ENCODE measurements at regions of chr10 and their contacts with region 1.

Region 1: GRCh38 chr10:103244663-103245271 is 920 bp upstream of the RPEL1 start:
- DNase-seq: peak; percentile 48 to 76
- ATAC-seq: peak; percentile 86 to 94 (median 89)
- H3K4me3 ChIP-seq: no peak overlapping the region
- H3K27ac ChIP-seq: no peak overlapping the region
- H3K4me1 ChIP-seq: peaks cover 6 to 33% (median 8%) of the 10 kb centered on the region in 9 donors
- H3K27me3 ChIP-seq: no peaks in the 10 kb centered on the region
- CTCF ChIP-seq: peak; percentile 70 to 94 (median 90)

Region 2: DNA sequence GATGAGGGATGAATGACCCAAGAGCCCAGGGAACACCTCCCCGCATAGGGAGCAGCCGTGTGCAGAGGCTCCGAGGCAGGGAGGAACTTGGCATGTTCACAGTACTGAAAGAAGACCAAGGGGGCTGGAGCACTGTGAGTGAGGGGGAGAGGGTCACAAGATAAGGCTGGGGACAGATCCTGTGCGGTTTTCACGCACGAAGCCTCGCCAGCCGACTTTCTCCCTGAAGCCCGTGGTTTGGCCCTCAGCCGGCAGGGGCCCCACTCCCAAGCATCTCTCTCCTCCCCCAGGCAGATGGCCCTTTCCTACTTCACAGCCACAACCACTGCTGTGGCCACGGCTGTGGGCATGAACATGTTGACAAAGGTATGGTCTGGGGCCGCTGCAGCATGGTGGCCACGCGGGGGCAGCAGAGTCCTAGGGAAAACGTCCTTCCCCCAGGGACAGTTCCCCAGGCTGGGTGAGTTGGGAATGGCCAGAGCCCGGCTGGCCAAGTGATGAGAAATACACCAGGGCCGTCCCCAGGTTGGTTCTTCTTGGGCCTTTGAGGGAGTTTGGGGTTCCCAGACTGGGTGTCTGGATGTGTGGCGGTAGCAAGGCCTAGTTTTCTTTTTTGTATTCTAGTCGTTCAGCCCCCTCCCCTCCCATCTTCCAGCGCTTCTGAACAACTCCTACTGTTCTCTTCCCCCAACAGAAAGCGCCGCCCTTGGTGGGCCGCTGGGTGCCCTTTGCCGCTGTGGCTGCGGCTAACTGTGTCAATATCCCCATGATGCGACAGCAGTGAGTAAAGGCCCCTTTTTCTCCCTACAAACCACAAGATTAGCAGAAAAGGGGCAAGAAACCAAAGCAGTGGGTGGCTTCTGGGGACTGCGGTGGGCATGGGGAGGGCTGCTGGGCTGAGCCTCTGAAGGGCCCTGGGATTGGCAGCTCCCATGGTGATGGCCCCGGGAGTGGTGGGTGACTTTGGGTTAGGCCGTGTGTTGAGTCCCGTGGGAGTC is 515.4 kb before region 1 on chr10:
- intact Hi-C with region 1: loop called in 2 of 10 experiments (anchors 5 to 10 kb)
- DNase-seq: peak; percentile 89 to 91
- ATAC-seq: peak; percentile 91 to 97 (median 95)
- H3K4me3 ChIP-seq: no peak overlapping the region
- H3K27ac ChIP-seq: peak overlapping the region in 1 of 10 donors; percentile 6
- H3K4me1 ChIP-seq: peaks cover 0 to 29% (median 6%) of the 10 kb centered on the region in 9 donors
- H3K27me3 ChIP-seq: no peaks in the 10 kb centered on the region
- CTCF ChIP-seq: peak; percentile 82 to 99 (median 96)

Region 3: GRCh38 chr10:102841827-102842345 is 402.9 kb before region 1 on chr10:
- intact Hi-C with region 1: loop called in 6 of 10 experiments (anchors 10 kb)
- DNase-seq: no peak
- ATAC-seq: no peak
- H3K4me3 ChIP-seq: no peak overlapping the region
- H3K27ac ChIP-seq: no peak overlapping the region
- H3K4me1 ChIP-seq: no peaks in the 10 kb centered on the region
- H3K27me3 ChIP-seq: peaks cover 0 to 3% (median 0%) of the 10 kb centered on the region in 7 donors
- CTCF ChIP-seq: no peak

Region 4: DNA sequence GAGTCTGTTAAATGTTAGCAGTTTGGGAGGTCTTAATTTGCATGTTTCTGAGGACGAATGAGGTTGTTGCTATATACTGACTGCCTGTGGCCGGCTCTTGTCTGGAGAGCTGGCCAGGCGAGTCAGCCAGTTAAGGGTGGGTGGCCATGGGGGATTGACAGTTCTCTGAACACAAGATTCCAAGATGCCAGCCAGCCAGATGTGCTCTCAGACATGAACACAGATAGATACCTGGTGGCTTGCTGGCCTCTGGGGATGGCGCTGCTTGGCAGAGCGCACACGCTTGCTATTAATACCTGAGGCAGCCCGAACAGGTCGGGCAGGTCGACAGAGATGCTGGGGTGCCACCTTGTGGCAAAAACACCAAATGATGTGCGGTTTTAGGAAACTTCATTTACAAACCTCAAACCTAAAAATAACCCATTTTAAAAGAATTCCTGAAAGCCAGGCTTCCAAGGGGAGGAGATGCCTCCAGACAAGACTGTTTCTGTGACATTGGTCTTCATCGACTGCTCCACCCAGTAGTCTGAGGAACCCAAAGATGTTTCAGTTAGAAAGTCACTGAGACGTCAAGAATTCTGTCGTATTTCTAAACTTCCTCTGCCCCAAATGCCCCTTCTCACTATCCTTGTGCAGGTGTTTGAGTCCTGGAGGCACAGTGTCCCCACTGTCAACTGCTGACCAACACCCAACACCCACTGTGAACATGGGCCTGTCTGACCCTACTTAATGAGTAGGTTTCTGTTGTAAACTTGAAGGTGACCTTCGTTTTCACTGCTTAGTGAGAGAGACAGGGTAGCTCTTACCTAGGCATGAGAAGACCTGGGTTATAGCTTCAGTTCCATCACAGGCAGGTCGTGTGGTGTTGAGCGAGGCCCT is 175.1 kb before region 1 on chr10:
- intact Hi-C with region 1: loop called in 1 of 10 experiments (anchors 10 kb)
- DNase-seq: peak; percentile 48 to 49
- ATAC-seq: peak; percentile 58 to 84 (median 80)
- H3K4me3 ChIP-seq: no peak overlapping the region
- H3K27ac ChIP-seq: no peak overlapping the region
- H3K4me1 ChIP-seq: peaks cover 0 to 19% (median 3%) of the 10 kb centered on the region in 9 donors
- H3K27me3 ChIP-seq: no peaks in the 10 kb centered on the region
- CTCF ChIP-seq: peak; percentile 38 to 76 (median 67)

Region 5: DNA sequence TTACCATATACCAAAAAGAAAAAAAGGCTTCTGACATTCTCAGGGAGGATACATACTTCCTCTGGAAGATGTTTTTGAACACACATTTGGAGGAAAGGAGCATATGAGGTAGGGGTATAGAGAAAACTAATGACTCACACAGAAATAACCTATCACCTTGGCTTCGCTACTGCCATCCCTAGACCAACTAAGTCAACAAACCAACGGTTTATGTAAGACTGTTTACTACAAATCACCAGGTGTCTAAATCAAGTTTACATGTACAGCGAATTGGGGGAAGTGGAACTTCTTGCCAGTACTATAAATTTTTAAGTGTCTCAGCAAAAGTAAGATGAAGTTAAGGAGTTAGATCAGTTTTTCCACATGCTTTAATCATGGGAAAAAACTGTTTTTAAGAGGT is 148.6 kb before region 1 on chr10:
- intact Hi-C with region 1: loop called in 4 of 10 experiments (anchors 10 kb)
- DNase-seq: no peak
- ATAC-seq: no peak
- H3K4me3 ChIP-seq: no peak overlapping the region
- H3K27ac ChIP-seq: no peak overlapping the region
- H3K4me1 ChIP-seq: peaks cover 0 to 9% (median 0%) of the 10 kb centered on the region in 9 donors
- H3K27me3 ChIP-seq: no peaks in the 10 kb centered on the region
- CTCF ChIP-seq: no peak

Region 6: DNA sequence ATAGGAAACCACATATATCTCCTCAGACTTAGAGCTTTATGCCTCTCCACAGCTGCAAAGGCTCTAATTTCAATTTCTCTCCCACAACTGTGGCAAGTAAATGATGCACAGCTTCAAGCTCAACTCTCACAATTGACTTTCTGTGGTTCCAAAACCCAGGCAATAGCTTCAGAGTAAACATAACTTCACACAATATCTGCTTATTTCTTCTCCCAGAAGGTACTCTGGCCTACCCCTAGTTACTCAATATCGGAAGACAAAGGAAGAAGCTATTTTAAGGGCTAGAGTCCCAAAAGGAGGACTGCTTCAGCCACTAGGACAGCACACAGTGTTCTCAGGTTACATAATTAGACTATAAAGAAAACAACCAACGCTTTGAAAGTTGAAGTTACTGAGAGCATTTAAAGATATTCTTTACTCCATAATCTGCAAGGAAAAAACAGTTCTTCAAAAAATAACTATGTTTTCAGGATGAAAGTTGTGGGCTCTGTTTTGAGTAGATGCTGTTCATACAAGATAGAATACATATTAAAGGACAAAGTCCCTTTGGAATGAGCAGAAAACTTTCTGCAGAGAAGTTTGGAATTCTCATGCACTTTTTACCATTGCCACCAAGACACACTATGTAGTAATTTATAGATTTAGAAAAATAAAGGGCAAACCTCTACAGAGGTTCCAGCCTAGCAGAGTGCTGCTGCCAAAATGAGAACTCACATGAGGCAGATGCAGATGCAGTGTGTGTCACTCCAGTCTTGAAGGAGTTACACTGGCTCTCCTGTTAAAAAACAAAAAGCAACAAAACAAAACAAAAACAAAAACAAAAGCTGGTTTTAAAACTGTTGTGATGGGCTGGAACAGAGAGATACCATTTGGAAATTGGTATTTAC is 133.5 kb before region 1 on chr10:
- intact Hi-C with region 1: loop called in 2 of 10 experiments (anchors 5 to 10 kb)
- DNase-seq: no peak
- ATAC-seq: peak in 7 of 8 donors; percentile 80 to 97 (median 87)
- H3K4me3 ChIP-seq: peak overlapping the region in 1 of 10 donors; percentile 3
- H3K27ac ChIP-seq: peak overlapping the region; percentile 16 to 78 (median 48)
- H3K4me1 ChIP-seq: peaks cover 14 to 45% (median 37%) of the 10 kb centered on the region in 9 donors
- H3K27me3 ChIP-seq: no peaks in the 10 kb centered on the region
- CTCF ChIP-seq: peak in 1 of 9 donors; percentile 7

Region 7: GRCh38 chr10:103396064-103396788 is 151.5 kb after region 1 on chr10 and contains the starts of genes ATP5MK and PDCD11:
- intact Hi-C with region 1: no loop called
- DNase-seq: peak; percentile 96 to 99
- ATAC-seq: peak; percentile 99 to 100 (median 100)
- H3K4me3 ChIP-seq: peak within 1 kb of the TSS; percentile 80 to 98 (median 86)
- H3K27ac ChIP-seq: peak within 1 kb of the TSS; percentile 77 to 96 (median 92)
- H3K4me1 ChIP-seq: peaks cover 3 to 53% (median 44%) of the 10 kb centered on the region in 9 donors
- H3K27me3 ChIP-seq: no peaks in the 10 kb centered on the region
- CTCF ChIP-seq: peak in 3 of 9 donors; percentile 23 to 35 (median 25)
- total RNA-seq, gene ATP5MK: 936 to 1,374 (median 1,266) TPM
- total RNA-seq, gene PDCD11: 9.4 to 16.9 (median 12.7) TPM

Region 8: DNA sequence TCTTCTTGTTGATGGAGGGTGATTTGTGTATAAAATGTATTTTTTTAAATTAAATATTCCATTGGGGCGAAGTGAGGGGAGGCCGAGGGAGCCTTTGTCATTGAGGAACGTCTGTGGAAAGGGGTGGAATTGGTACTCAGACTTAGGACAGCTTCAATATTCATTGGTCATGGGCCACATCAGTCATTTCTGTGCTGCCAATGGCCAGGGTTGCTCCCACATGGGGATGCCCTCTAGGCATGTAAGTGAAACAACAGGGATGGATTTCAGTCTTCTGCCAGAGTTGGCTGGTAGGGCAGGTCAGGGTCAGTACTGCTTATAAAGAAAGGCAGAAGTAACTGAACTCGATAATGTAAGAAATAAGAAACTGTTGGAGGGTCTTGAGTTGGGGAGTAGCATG is 296.0 kb after region 1 on chr10:
- intact Hi-C with region 1: no loop called
- DNase-seq: no peak
- ATAC-seq: no peak
- H3K4me3 ChIP-seq: no peak overlapping the region
- H3K27ac ChIP-seq: no peak overlapping the region
- H3K4me1 ChIP-seq: peaks cover 5 to 15% (median 11%) of the 10 kb centered on the region in 9 donors
- H3K27me3 ChIP-seq: peaks cover 0 to 13% (median 0%) of the 10 kb centered on the region in 7 donors
- CTCF ChIP-seq: no peak

Measured in heart right ventricle (tissue), 16 donors.